ENCODE measurements at regions of chr17 and their contacts with region 1.

Region 1: DNA sequence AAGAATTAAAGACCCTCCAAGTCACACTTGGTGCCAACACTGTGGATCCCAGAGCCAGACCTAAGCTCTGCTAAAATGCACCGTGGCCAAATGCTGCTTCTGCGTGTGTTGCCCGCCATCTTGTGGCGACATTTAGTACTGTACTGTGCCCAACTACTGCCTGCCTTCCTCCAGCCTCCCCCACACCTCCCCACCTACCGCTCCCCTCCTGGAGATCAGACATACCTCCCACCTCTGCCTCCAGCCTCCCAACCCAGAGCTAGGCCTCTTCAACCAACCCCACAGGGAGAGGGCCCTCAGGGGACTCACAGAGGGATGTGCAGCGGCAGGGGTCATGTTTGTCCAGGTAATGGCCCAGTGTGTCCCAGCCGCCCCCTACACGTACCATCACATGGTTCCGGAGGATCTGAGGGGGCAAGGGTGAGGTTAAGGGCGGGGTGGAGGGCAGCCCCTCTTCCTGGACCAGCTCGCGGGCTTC is 5.5 kb downstream of the GAS2L2 start:
- DNase-seq: peak; percentile 72 to 76 (median 75)
- H3K4me3 ChIP-seq: no peak overlapping the region
- H3K4me3 Mint-ChIP-seq: no peak overlapping the region
- H3K27ac ChIP-seq: no peak overlapping the region
- H3K27ac Mint-ChIP-seq: no peak overlapping the region
- H3K4me1 ChIP-seq: no peaks in the 10 kb centered on the region
- H3K4me1 Mint-ChIP-seq: peaks cover 0 to 9% (median 2%) of the 10 kb centered on the region in 4 donors
- H3K27me3 ChIP-seq: peaks cover 27% of the 10 kb centered on the region
- H3K27me3 Mint-ChIP-seq: peaks cover 24 to 38% of the 10 kb centered on the region in 2 donors

Region 2: GRCh38 chr17:34542700-34543336 is 1204.8 kb before region 1 on chr17:
- CTCF ChIA-PET with region 1: interaction called, 5 read pairs
- POLR2A ChIA-PET with region 1: no interaction called
- intact Hi-C with region 1: loop called (anchors 1 kb)
- DNase-seq: peak in 4 of 5 donors; percentile 41 to 52 (median 48)
- H3K4me3 ChIP-seq: no peak overlapping the region
- H3K4me3 Mint-ChIP-seq: no peak overlapping the region
- H3K27ac ChIP-seq: no peak overlapping the region
- H3K27ac Mint-ChIP-seq: no peak overlapping the region
- H3K4me1 ChIP-seq: no peaks in the 10 kb centered on the region
- H3K4me1 Mint-ChIP-seq: no peaks in the 10 kb centered on the region
- H3K27me3 ChIP-seq: no peaks in the 10 kb centered on the region
- H3K27me3 Mint-ChIP-seq: peaks cover 17 to 26% of the 10 kb centered on the region in 2 donors

Region 3: DNA sequence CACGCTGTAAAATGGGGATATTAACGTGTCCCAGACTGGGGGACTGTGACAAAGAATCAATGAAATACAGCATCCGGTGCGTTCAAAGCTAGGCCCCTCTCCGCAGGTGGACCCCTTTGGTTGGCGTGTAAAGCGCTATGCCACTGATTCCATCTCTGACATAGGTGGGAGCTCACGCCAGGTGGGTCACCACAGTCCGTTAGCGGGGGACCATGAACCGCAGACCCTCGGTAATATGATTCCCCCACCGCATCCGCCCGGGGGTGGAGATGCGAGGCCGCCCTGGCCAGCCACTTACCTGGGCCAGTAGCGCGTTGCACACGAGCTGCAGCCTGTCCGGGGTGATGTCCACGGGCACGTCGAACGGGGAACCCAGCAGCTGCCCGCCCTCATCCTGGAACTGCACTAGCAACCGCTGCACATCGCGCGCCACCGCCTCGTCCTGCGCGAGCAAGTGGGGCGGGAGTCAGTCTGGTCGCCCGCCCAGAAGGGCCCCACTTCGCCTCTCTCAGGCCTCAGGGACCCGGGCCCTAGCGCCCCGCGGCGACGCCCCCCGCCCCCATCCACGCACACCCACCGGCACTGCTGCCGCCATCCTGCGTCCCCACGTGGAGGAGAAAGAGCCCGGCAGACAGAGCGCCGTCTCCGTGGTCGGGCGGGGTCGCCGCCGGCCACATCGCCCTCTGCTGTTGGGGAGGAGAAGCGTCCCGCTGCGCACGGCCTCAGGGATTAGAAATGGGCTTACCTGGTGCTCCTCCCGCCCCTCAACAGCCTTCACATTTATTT is 605.7 kb before region 1 on chr17 and contains the start of gene NLE1:
- CTCF ChIA-PET with region 1: interaction called, 7 read pairs
- POLR2A ChIA-PET with region 1: interaction called, 4 read pairs
- intact Hi-C with region 1: loop called (anchors 1 kb)
- DNase-seq: peak; percentile 85 to 89 (median 87)
- H3K4me3 ChIP-seq: peak within 1 kb of the TSS; percentile 80 to 99
- H3K4me3 Mint-ChIP-seq: peak within 1 kb of the TSS; percentile 82 to 91 (median 88)
- H3K27ac ChIP-seq: peak within 1 kb of the TSS; percentile 77
- H3K27ac Mint-ChIP-seq: peak within 1 kb of the TSS; percentile 72 to 91 (median 78)
- H3K4me1 ChIP-seq: peaks cover 14% of the 10 kb centered on the region
- H3K4me1 Mint-ChIP-seq: peaks cover 8 to 32% (median 20%) of the 10 kb centered on the region in 4 donors
- H3K27me3 ChIP-seq: no peaks in the 10 kb centered on the region
- H3K27me3 Mint-ChIP-seq: no peaks in the 10 kb centered on the region
- total RNA-seq, gene NLE1: 20.1 to 20.5 TPM

Region 4: DNA sequence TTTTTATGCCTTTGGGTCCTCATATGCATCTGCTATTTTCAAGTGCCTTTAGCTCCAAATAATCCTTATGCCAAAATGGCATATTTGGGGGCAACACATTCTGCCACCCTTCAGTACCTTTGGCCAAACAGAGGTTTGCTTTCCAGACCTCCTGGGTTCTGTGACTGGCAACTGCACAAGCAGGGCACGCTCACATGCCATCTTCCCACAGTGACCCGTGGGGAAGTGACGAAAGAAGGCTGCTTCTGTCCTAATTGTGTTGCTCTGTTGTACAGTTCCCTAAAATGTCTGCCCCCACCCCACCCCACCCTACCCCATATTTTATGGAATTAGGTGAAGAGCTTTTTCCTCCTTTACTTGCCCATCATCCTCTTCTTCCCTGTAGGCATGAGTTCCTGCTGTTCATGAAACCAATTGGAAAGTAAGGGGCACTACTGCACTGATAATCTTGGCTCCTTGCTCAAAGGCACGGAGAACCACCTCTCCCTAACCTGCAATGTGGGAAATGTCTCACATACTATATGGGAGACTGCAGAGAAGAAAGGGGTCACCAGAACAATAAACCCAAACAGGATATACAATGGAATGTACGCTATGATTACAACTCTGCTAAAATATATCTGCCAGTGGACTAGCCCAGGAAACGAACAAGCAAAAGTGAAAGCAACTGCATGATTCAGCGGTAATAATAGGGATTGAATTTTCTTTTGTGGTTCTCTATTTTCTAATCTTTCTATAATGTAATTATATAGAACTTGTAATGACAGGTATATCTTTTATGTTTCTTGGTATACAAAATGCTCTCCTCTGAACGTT is 206.8 kb before region 1 on chr17:
- CTCF ChIA-PET with region 1: interaction called, 5 read pairs
- POLR2A ChIA-PET with region 1: interaction called, 3 read pairs
- intact Hi-C with region 1: loop called (anchors 5 kb)
- DNase-seq: peak in 4 of 5 donors; percentile 43 to 54 (median 50)
- H3K4me3 ChIP-seq: peak overlapping the region; percentile 60 to 79
- H3K4me3 Mint-ChIP-seq: peak overlapping the region; percentile 87 to 98 (median 92)
- H3K27ac ChIP-seq: peak overlapping the region; percentile 74
- H3K27ac Mint-ChIP-seq: peak overlapping the region; percentile 80 to 98 (median 95)
- H3K4me1 ChIP-seq: peaks cover 45% of the 10 kb centered on the region
- H3K4me1 Mint-ChIP-seq: peaks cover 32 to 62% (median 45%) of the 10 kb centered on the region in 4 donors
- H3K27me3 ChIP-seq: no peaks in the 10 kb centered on the region
- H3K27me3 Mint-ChIP-seq: no peaks in the 10 kb centered on the region

Region 5: GRCh38 chr17:35731239-35731931 is 16.2 kb before region 1 on chr17 and contains the start of gene RASL10B:
- CTCF ChIA-PET with region 1: interaction called, 13 read pairs
- POLR2A ChIA-PET with region 1: interaction called, 3 read pairs
- intact Hi-C with region 1: no loop called
- DNase-seq: peak; percentile 40 to 61 (median 43)
- H3K4me3 ChIP-seq: peak within 1 kb of the TSS in 1 of 2 donors; percentile 37
- H3K4me3 Mint-ChIP-seq: peak within 1 kb of the TSS; percentile 75 to 85 (median 80)
- H3K27ac ChIP-seq: no peak within 1 kb of the TSS
- H3K27ac Mint-ChIP-seq: peak within 1 kb of the TSS in 5 of 7 donors; percentile 22 to 61 (median 43)
- H3K4me1 ChIP-seq: peaks cover 12% of the 10 kb centered on the region
- H3K4me1 Mint-ChIP-seq: peaks cover 9 to 32% (median 18%) of the 10 kb centered on the region in 4 donors
- H3K27me3 ChIP-seq: no peaks in the 10 kb centered on the region
- H3K27me3 Mint-ChIP-seq: no peaks in the 10 kb centered on the region
- total RNA-seq, gene RASL10B: 0.15 TPM in 1 of 2 experiments, not detected in the other

Region 6: DNA sequence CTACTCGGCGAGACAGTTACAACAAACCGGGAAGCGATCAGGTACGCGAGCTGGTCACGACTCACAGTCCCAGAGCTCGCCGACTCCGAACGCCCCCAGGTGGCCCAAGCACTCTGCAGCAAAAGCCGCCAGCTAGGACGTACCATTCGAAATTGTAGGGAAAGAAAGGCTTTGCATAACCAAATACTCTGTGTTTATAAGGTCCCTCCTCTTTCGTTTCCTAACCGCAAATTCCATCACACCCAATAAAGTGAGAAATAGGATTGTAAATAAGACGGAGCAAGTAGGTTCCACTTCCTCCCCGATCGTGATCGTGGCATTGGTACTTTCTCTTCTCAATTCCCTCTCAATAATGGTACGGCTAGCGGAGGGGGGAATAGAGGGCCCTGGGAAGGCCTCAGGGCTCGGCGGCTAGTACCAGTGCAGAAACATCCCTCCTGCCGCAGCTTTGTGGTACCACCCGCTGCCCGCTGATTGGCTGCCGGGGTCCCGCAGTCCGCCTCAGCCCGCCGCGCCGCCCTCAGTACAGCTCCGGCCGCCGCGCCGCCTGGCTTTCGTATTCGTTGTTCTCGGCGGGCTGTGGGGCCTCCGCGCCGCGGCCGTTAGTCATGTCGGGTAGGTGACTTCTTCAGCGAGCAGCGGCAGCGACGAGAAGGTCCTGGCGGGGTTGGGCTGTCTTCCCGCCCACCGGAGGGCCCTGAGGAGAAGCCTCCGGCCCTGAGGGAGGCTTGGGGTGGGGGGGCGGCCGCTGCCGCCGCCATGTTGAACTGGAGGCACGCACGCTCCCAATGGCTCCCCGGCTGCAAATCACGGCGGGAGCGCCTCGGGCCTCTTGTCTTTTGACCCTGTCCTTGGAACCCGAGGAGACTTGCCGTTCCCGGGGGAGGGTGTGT is 61.6 kb after region 1 on chr17 and contains the start of gene TAF15:
- CTCF ChIA-PET with region 1: interaction called, 10 read pairs
- POLR2A ChIA-PET with region 1: no interaction called
- intact Hi-C with region 1: no loop called
- DNase-seq: peak; percentile 96 to 99 (median 97)
- H3K4me3 ChIP-seq: peak within 1 kb of the TSS; percentile 67 to 96
- H3K4me3 Mint-ChIP-seq: peak within 1 kb of the TSS; percentile 95 to 98 (median 97)
- H3K27ac ChIP-seq: peak within 1 kb of the TSS; percentile 85
- H3K27ac Mint-ChIP-seq: peak within 1 kb of the TSS; percentile 93 to 99 (median 98)
- H3K4me1 ChIP-seq: peaks cover 51% of the 10 kb centered on the region
- H3K4me1 Mint-ChIP-seq: peaks cover 32 to 66% (median 48%) of the 10 kb centered on the region in 4 donors
- H3K27me3 ChIP-seq: no peaks in the 10 kb centered on the region
- H3K27me3 Mint-ChIP-seq: no peaks in the 10 kb centered on the region
- total RNA-seq, gene TAF15: 232 to 242 TPM

Region 7: DNA sequence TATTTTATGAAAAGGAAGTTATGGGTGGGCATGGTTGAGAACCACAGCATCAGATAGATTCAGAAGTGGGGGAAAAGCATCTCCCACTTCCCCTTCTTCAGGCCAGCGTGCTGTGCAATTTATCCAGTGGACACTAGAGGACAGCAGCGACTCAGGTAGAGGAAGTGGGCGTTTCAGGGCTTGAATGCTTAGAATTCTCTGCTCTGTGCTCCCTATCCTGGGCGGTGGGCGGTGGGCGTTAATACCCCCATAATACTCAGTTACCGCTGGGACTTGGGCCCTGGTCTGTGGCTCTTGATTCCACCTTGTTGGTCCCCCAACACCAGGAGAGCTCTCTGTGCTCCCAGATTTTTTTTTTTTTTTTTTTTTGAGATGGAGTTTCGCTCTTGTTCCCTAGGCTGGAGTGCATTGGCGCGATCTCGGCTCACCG is 199.6 kb after region 1 on chr17:
- CTCF ChIA-PET with region 1: no interaction called
- POLR2A ChIA-PET with region 1: no interaction called
- intact Hi-C with region 1: no loop called
- DNase-seq: peak in 4 of 5 donors; percentile 17 to 32 (median 28)
- H3K4me3 ChIP-seq: no peak overlapping the region
- H3K4me3 Mint-ChIP-seq: no peak overlapping the region
- H3K27ac ChIP-seq: no peak overlapping the region
- H3K27ac Mint-ChIP-seq: no peak overlapping the region
- H3K4me1 ChIP-seq: peaks cover 3% of the 10 kb centered on the region
- H3K4me1 Mint-ChIP-seq: peaks cover 0 to 6% (median 0%) of the 10 kb centered on the region in 4 donors
- H3K27me3 ChIP-seq: no peaks in the 10 kb centered on the region
- H3K27me3 Mint-ChIP-seq: no peaks in the 10 kb centered on the region